Activated CD8-positive, alpha-beta T cell treated with anti-CD3 and anti-CD28 coated beads, Interleukin-2, amount 10 ng/mL, durations not matched to agents 7 days and 5 days (primary cell): ENCODE measurements at regions of chr12 and their contacts with region 1.

Region 1: DNA sequence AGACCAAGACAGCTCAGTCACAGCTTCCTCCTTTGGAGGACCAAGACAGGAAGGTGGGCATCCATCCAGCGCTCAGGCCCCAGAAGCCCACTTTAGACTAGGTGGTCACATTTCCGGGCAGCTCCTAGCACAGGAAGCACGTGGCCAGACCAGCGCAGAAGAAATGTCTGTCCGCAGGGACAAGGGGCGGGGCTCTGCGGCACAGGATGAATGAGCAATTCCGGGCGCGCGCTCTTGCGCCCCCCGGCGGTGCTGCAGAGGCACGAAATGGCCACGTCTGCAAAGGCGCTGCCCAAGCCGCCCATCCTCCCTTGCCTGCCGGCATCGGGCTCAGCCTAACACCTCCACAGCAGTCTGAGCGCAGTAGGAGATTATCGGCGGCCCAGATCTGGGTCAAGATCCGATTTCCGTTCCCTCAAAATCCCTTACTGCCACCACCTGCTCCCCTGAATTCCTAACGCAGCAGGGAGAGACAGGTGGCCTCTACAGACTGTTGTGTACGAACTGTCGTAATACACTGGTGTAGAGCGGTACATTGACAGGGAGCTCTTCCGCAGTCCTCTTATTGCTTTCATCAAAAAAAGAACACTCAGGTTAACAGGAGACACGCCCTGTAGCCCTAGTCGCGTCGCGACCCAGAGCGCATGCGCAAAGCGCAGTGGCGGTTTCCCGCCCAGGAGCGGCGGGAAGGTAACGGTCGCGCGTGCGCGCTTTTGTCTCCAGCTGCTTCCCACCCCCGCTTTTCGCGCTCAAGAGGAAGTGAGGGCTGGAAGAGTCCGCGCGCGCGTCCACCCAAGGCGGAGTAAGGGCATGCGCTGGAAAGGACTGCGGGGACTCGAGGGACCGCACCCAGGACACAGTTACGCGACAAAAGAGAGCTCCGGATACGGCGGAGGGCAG is 794 bp downstream of the TUBA1B start:
- DNase-seq: peak; percentile 93
- ATAC-seq: peak; percentile 59
- H3K4me3 Mint-ChIP-seq: peak overlapping the region; percentile 98
- H3K27ac Mint-ChIP-seq: peak overlapping the region; percentile 99
- H3K4me1 Mint-ChIP-seq: peaks cover 53% of the 10 kb centered on the region
- H3K27me3 Mint-ChIP-seq: no peaks in the 10 kb centered on the region

Region 2: DNA sequence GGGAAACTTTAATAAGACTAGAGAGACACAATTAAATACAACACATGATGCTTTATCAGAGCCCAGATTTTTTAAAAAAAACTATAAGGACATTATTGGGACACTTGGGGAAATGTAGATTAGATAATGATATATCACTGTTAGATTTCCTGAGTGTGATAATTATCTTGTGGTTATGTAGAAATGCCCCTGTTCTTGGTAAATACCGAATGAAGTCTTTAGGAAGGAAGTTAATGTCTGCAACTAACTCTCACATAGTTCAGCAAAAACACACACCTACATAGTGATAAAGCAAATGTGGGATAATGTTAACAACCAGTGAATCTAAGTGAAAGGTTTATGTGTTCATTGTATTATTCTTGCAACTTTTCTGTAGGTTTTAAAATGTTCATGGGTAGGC is 326.7 kb before region 1 on chr12:
- CTCF ChIA-PET with region 1: no interaction called
- POLR2A ChIA-PET with region 1: no interaction called
- DNase-seq: no peak
- ATAC-seq: peak; percentile 58
- H3K4me3 Mint-ChIP-seq: no peak overlapping the region
- H3K27ac Mint-ChIP-seq: peak overlapping the region; percentile 27
- H3K4me1 Mint-ChIP-seq: peaks cover 19% of the 10 kb centered on the region
- H3K27me3 Mint-ChIP-seq: no peaks in the 10 kb centered on the region

Region 3: GRCh38 chr12:48832321-48833060 is 297.9 kb before region 1 on chr12:
- CTCF ChIA-PET with region 1: no interaction called
- POLR2A ChIA-PET with region 1: no interaction called
- DNase-seq: no peak
- ATAC-seq: no peak
- H3K4me3 Mint-ChIP-seq: no peak overlapping the region
- H3K27ac Mint-ChIP-seq: no peak overlapping the region
- H3K4me1 Mint-ChIP-seq: no peaks in the 10 kb centered on the region
- H3K27me3 Mint-ChIP-seq: no peaks in the 10 kb centered on the region

Region 4: DNA sequence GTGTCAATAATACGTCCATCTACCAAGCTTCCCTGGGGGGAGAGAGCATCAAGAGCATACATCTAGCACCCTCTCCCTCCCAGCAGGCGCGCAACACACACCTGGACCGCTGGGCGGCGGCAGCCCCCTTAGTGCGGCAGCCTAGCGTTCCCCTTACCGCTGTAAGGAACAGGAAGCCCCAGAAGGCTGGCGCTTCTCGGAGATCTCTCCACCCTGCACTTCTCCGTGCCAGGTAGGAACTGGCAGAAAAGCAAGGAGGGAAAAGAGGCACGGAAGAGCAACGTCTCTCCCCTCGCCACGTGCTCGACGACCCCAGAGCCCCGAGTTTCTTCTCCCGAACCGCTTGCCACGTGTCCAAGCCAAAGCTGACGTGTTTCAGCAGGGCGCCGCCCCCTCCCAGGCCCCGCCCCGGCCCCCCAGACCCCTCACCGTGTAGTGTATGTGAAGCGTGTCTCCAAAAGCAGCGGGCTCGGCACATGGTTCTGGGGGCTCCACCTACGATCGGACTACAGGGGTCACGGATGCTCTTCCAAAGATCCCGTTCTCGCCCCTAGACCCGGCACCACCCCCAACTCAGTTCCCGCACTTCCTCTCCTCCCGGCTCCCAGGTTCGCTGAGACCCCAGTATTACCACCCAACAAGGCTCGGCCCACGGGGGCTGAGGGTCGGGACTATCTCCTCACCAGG is 205.6 kb before region 1 on chr12:
- CTCF ChIA-PET with region 1: no interaction called
- POLR2A ChIA-PET with region 1: no interaction called
- DNase-seq: peak; percentile 85
- ATAC-seq: peak; percentile 87
- H3K4me3 Mint-ChIP-seq: peak overlapping the region; percentile 93
- H3K27ac Mint-ChIP-seq: peak overlapping the region; percentile 95
- H3K4me1 Mint-ChIP-seq: peaks cover 21% of the 10 kb centered on the region
- H3K27me3 Mint-ChIP-seq: no peaks in the 10 kb centered on the region

Region 5: GRCh38 chr12:49010092-49010668 is 120.2 kb before region 1 on chr12:
- CTCF ChIA-PET with region 1: no interaction called
- POLR2A ChIA-PET with region 1: no interaction called
- DNase-seq: no peak
- ATAC-seq: no peak
- H3K4me3 Mint-ChIP-seq: no peak overlapping the region
- H3K27ac Mint-ChIP-seq: no peak overlapping the region
- H3K4me1 Mint-ChIP-seq: no peaks in the 10 kb centered on the region
- H3K27me3 Mint-ChIP-seq: no peaks in the 10 kb centered on the region

Region 6: GRCh38 chr12:49088190-49088931 is 42.0 kb before region 1 on chr12:
- CTCF ChIA-PET with region 1: interaction called, 69 read pairs
- POLR2A ChIA-PET with region 1: interaction called, 45 read pairs
- DNase-seq: peak; percentile 86
- ATAC-seq: peak; percentile 87
- H3K4me3 Mint-ChIP-seq: no peak overlapping the region
- H3K27ac Mint-ChIP-seq: peak overlapping the region; percentile 31
- H3K4me1 Mint-ChIP-seq: peaks cover 64% of the 10 kb centered on the region
- H3K27me3 Mint-ChIP-seq: peaks cover 41% of the 10 kb centered on the region

Region 7: GRCh38 chr12:49110464-49111155 is 19.8 kb before region 1 on chr12 and contains the start of gene LMBR1L:
- CTCF ChIA-PET with region 1: interaction called, 46 read pairs
- POLR2A ChIA-PET with region 1: interaction called, 165 read pairs
- DNase-seq: peak; percentile 99
- ATAC-seq: peak; percentile 99
- H3K4me3 Mint-ChIP-seq: peak within 1 kb of the TSS; percentile 97
- H3K27ac Mint-ChIP-seq: peak within 1 kb of the TSS; percentile 79
- H3K4me1 Mint-ChIP-seq: peaks cover 29% of the 10 kb centered on the region
- H3K27me3 Mint-ChIP-seq: no peaks in the 10 kb centered on the region
- total RNA-seq, gene LMBR1L: 35.8 to 37.8 TPM

Region 8: DNA sequence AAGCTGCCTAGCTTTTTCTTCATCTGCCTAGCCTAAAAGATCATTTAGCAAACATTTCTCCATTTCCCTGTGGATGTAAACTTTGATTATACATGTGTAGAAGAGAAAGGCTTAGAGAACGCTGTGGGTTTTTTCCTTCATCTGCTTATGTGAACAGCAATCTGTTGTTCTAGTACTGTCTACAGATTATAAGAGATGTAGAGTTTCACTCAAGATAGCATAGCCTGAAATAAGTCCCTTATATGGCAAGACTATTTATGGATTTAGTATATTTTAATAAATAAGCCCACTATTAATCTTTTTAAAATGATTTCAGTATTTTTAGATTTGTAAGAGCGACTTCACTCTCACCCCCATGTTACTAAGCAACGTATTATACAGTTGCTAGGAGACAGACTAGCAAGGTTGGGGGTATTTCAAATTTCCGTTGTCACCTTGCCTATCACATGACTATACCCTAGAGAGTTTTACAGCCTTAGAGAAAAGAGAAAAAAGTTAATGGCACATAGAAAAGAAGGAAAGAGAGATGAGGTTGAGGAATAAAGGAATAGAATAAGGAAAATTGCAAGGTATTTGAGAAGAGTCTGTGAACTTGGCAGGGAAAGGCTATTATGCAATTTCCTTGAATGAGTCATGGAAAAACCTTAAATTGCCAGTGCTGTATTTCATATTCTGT is 70.7 kb after region 1 on chr12:
- CTCF ChIA-PET with region 1: no interaction called
- POLR2A ChIA-PET with region 1: interaction called, 24 read pairs
- DNase-seq: no peak
- ATAC-seq: peak; percentile 86
- H3K4me3 Mint-ChIP-seq: no peak overlapping the region
- H3K27ac Mint-ChIP-seq: no peak overlapping the region
- H3K4me1 Mint-ChIP-seq: peaks cover 14% of the 10 kb centered on the region
- H3K27me3 Mint-ChIP-seq: peaks cover 13% of the 10 kb centered on the region

Region 9: GRCh38 chr12:49264738-49265515 is 134.5 kb after region 1 on chr12 and contains the start of gene TUBA1C:
- CTCF ChIA-PET with region 1: interaction called, 5 read pairs
- POLR2A ChIA-PET with region 1: interaction called, 49 read pairs
- DNase-seq: peak; percentile 94
- ATAC-seq: peak; percentile 88
- H3K4me3 Mint-ChIP-seq: peak within 1 kb of the TSS; percentile 99
- H3K27ac Mint-ChIP-seq: peak within 1 kb of the TSS; percentile 99
- H3K4me1 Mint-ChIP-seq: peaks cover 47% of the 10 kb centered on the region
- H3K27me3 Mint-ChIP-seq: no peaks in the 10 kb centered on the region
- total RNA-seq, gene TUBA1C: 308 to 324 TPM